ENCODE measurements at regions of chr1 and their contacts with region 1.

Region 1: DNA sequence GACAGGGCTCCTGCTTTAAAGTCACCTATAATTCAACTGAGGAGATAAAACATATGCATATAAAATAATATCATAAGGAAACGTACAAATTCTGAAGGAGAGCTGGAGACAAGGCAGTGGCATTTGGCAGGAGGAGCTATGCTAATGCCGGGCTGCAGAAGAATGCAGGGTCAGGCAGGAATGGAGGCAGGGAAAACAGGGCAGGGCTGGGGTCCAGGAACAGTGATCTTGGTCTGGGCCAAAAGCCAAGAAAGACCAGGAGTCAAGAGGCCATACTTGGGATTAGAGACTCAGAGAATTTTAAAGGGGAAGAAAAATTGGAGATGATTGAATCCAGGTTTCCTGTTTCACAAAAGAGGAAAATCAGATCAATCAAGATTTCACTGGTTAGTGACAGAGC is 20.0 kb upstream of the BRDT start:
- DNase-seq: no peak
- ATAC-seq: no peak
- H3K4me3 ChIP-seq: no peak overlapping the region
- H3K27ac ChIP-seq: no peak overlapping the region
- H3K4me1 ChIP-seq: no peaks in the 10 kb centered on the region
- H3K27me3 ChIP-seq: no peaks in the 10 kb centered on the region
- CTCF ChIP-seq: no peak
- EP300 ChIP-seq: no peak
- POLR2A ChIP-seq: no peak
- RAD21 ChIP-seq: no peak

Region 2: DNA sequence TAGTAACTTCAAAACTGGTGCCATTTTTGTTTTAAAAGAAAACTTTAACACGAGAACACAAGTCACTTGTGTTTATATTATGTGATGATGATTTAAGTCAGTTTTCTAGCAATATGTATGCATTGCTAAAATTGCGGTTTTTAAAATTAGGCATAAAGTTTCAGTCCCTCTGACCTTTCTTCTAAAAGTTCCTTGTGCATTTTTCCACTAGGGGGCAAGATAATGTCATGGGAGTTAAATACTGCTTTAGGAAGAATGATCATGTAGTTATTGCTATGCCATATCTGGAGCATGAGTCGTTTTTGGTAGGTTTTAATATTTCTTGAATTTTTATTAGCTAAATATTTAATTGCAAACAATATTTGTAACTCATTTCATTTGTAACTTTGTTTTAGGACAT is 417.9 kb before region 1 on chr1:
- CTCF ChIA-PET with region 1: interaction called, 50 read pairs
- POLR2A ChIA-PET with region 1: no interaction called
- in situ Hi-C with region 1: loop called (anchors 5 kb)
- intact Hi-C with region 1: loop called (anchors 1 kb)
- DNase-seq: peak; percentile 15 to 52 (median 32)
- ATAC-seq: peak; percentile 72
- H3K4me3 ChIP-seq: no peak overlapping the region
- H3K27ac ChIP-seq: no peak overlapping the region
- H3K4me1 ChIP-seq: no peaks in the 10 kb centered on the region
- H3K27me3 ChIP-seq: no peaks in the 10 kb centered on the region
- CTCF ChIP-seq: peak; percentile 28 to 69 (median 45); a peak in 4 of 6 replicates
- EP300 ChIP-seq: no peak
- POLR2A ChIP-seq: no peak
- RAD21 ChIP-seq: peak; percentile 70 to 74

Measured in K562 (cell line).